Activated B cell treated with CpG ODN at 0.5 μM for 24 hours (primary cell): ENCODE measurements at regions of chr1 and their contacts with region 1.

Region 1: GRCh38 chr1:181166377-181167196 is 78.1 kb downstream of the IER5 start:
- DNase-seq: peak; percentile 29
- ATAC-seq: peak; percentile 100
- H3K4me3 Mint-ChIP-seq: no peak overlapping the region
- H3K27ac Mint-ChIP-seq: no peak overlapping the region
- H3K4me1 Mint-ChIP-seq: peaks cover 3% of the 10 kb centered on the region
- H3K27me3 Mint-ChIP-seq: peaks cover 2% of the 10 kb centered on the region
- CTCF ChIP-seq: peak; percentile 74

Region 2: GRCh38 chr1:180533266-180533987 is 633.2 kb before region 1 on chr1:
- CTCF ChIA-PET with region 1: interaction called, 4 read pairs
- POLR2A ChIA-PET with region 1: no interaction called
- intact Hi-C with region 1: loop called (anchors 1 kb)
- DNase-seq: peak; percentile 36
- ATAC-seq: peak; percentile 71
- H3K4me3 Mint-ChIP-seq: no peak overlapping the region
- H3K27ac Mint-ChIP-seq: no peak overlapping the region
- H3K4me1 Mint-ChIP-seq: peaks cover 5% of the 10 kb centered on the region
- H3K27me3 Mint-ChIP-seq: peaks cover 11% of the 10 kb centered on the region
- CTCF ChIP-seq: peak; percentile 42

Region 3: GRCh38 chr1:180881806-180882509 is 284.6 kb before region 1 on chr1:
- CTCF ChIA-PET with region 1: interaction called, 17 read pairs
- POLR2A ChIA-PET with region 1: no interaction called
- intact Hi-C with region 1: loop called (anchors 1 kb)
- DNase-seq: no peak
- ATAC-seq: no peak
- H3K4me3 Mint-ChIP-seq: no peak overlapping the region
- H3K27ac Mint-ChIP-seq: no peak overlapping the region
- H3K4me1 Mint-ChIP-seq: no peaks in the 10 kb centered on the region
- H3K27me3 Mint-ChIP-seq: no peaks in the 10 kb centered on the region
- CTCF ChIP-seq: no peak

Region 4: DNA sequence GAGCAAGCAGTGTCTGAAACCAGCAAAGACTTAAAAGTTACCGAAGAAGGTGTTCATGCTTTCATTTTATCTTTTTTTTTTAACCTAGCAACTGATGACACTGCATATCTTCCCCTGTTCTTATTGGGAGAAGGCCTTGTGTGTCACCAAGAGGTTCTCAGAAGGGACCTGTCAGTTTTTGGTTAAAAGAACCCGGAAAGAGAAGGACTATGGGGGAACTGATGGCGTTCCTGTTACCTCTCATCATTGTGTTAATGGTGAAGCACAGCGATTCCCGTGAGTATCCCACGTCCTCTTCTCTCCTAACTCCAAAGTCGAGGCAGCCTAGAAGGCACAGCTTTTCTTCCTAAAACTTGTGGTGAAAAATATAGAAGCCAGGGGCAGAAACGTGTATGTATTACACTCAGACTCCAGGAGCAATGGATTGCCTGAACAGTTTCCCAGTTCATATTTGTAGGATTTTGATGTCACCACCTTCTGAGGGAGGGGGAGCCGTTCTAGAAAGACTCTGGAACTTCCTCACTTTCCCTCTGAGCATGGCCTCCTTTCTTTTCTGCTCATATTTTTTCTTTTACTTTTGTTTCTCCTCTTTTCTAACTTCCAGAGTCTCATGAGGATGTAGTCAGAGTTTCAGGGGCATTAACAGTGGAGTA is 132.7 kb before region 1 on chr1 and contains the start of gene MR1:
- CTCF ChIA-PET with region 1: interaction called, 13 read pairs
- POLR2A ChIA-PET with region 1: no interaction called
- intact Hi-C with region 1: loop called (anchors 1 kb)
- DNase-seq: no peak
- ATAC-seq: peak; percentile 96
- H3K4me3 Mint-ChIP-seq: peak within 1 kb of the TSS; percentile 98
- H3K27ac Mint-ChIP-seq: peak within 1 kb of the TSS; percentile 99
- H3K4me1 Mint-ChIP-seq: peaks cover 60% of the 10 kb centered on the region
- H3K27me3 Mint-ChIP-seq: no peaks in the 10 kb centered on the region
- CTCF ChIP-seq: no peak
- total RNA-seq, gene MR1: 24.3 and 24.8 TPM in 2 replicates